ENCODE measurements at regions of chr5 and their contacts with region 1.

Region 1: DNA sequence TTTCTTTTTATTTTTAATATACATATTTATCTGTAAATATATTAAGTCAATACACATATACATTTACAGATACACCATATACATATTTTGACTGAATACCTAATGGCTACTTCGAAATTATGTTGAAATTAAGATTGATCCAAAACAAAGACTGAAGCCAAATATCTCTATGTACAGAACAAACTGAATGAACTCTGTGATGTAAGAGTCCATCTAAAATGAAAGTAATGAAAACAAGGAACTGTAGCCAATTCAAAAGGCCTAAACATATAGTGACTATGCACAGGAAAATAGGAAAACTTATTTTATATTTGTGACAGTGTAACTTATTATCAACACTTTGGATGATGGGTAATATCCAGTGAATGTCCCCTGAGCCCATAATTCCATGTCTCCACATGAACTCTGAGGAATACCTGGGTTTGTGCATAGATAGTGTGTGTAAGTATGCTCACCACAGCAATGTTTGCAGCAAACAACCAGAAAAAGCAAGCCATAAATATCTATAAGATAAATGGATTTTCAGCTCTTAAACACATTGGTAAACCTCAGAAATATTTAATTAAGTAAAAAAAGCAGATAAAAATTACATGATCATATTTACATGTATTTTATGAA is 517.2 kb upstream of the CDH6 start:
- DNase-seq: no peak
- H3K4me3 ChIP-seq: no peak overlapping the region
- H3K27ac ChIP-seq: no peak overlapping the region
- H3K4me1 ChIP-seq: no peaks in the 10 kb centered on the region
- CTCF ChIP-seq: no peak

Region 2: DNA sequence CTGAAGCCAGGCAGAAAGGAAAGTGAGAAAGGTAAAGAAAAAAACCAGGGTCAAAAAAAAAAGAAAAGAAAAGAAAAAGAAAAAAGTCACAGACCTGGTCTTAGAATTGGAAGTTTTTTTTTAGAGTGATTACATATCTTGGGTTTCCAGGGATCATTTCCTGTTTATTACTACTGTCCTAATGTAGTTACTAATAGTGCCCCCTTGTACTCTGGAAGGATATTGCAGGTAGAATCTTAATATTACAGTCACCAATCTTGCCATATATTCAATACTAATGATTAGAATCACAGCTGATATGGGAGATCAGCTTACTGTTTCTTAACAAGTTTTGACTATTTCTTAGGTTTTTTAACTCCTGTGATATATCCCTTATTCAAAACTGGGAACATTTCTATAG is 26.0 kb before region 1 on chr5:
- CTCF ChIA-PET with region 1: no interaction called
- POLR2A ChIA-PET with region 1: no interaction called
- intact Hi-C with region 1: no loop called
- DNase-seq: no peak
- H3K4me3 ChIP-seq: no peak overlapping the region
- H3K27ac ChIP-seq: no peak overlapping the region
- H3K4me1 ChIP-seq: no peaks in the 10 kb centered on the region
- CTCF ChIP-seq: 0 out of 2 replicates have a peak, but pooled peaks have one; percentile 26

Region 3: DNA sequence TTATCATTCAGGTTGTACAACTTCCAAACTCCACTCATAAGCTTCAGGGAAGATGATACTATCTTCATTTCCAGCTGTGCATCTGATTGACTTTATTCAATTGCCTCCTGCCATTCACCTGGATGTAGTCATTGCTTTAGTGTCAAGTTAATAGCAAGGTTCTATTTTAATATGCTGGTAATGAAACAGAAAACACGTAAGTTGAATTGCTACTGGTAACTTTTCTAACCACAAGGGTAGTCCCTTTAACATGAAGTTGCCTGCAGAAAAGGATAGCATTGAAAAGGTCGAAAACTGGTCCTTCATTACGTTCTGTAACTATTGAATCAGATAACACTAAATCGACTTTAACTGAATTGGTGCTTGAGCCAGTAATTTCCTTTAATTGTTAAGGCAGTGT is 57.8 kb after region 1 on chr5:
- CTCF ChIA-PET with region 1: no interaction called
- POLR2A ChIA-PET with region 1: no interaction called
- intact Hi-C with region 1: no loop called
- DNase-seq: no peak
- H3K4me3 ChIP-seq: no peak overlapping the region
- H3K27ac ChIP-seq: no peak overlapping the region
- H3K4me1 ChIP-seq: no peaks in the 10 kb centered on the region
- CTCF ChIP-seq: no peak

Region 4: DNA sequence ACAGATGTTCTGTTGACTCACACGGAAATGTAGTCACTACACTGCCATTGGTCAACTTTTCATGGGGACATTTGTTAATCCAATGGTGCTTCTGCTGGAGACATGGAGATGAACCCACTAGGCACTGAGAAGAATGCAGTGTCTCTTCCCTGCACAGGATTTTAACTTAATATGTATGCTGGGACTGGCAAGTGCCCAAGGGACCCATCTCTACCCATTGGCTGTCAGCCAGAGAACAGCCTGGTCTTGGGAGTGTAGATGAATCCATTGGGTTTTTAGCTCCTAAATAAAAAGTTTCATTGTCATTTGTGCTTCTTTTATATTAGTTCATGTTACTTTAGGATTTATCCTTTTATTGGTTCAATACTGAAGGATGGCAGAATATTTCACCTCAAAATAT is 321.3 kb after region 1 on chr5:
- CTCF ChIA-PET with region 1: no interaction called
- POLR2A ChIA-PET with region 1: interaction called, 10 read pairs
- intact Hi-C with region 1: no loop called
- DNase-seq: no peak
- H3K4me3 ChIP-seq: no peak overlapping the region
- H3K27ac ChIP-seq: no peak overlapping the region
- H3K4me1 ChIP-seq: no peaks in the 10 kb centered on the region
- CTCF ChIP-seq: no peak